Left cardiac atrium (tissue), 4 donors: ENCODE measurements at regions of chr6 and their contacts with region 1.

Region 1: GRCh38 chr6:7725849-7726415 is at the start of gene BMP6:
- DNase-seq: peak; percentile 91
- ATAC-seq: peak; percentile 91 to 97
- total RNA-seq, gene BMP6: 2.1 to 13.4 TPM

Region 2: DNA sequence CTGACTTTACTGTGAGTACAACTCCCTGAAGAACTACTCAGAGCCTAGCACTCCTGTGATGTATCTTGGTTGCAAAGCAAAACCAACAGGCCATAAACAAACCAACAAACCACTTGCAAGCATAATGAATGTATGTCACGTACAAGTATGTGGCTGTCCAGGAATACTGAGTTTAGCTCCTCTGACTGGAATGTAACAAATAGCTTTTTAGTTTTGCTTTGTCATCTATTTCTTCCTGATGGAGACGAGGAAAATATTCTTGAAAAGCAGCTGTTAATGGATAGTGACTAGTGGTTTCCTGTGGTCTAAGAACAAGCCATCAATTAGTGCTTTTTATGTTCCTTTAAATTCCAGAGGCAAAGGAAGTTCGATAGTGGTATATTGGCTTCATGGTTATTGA is 1239.3 kb before region 1 on chr6:
- intact Hi-C with region 1: no loop called
- DNase-seq: no peak
- ATAC-seq: no peak

Region 3: DNA sequence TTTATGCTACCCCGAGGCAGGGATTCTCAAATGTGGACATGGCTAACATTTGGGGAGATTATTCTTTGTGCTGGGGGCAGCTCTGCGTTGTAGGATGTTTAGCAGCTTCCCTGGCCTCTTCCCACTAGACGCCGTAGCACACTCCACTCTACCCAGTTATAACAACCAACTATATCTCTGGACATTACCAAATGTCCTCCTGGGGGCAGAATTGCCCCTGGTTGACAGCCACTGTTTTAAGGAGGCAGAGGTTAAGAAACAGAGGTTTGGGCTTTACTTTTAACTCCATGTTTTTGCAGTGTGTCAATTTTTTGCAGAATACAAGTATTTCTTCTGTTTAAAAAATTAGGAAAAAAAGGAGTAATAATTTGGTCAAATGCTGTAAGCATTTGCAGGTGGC is 56.2 kb before region 1 on chr6:
- intact Hi-C with region 1: no loop called
- DNase-seq: no peak
- ATAC-seq: no peak

Region 4: DNA sequence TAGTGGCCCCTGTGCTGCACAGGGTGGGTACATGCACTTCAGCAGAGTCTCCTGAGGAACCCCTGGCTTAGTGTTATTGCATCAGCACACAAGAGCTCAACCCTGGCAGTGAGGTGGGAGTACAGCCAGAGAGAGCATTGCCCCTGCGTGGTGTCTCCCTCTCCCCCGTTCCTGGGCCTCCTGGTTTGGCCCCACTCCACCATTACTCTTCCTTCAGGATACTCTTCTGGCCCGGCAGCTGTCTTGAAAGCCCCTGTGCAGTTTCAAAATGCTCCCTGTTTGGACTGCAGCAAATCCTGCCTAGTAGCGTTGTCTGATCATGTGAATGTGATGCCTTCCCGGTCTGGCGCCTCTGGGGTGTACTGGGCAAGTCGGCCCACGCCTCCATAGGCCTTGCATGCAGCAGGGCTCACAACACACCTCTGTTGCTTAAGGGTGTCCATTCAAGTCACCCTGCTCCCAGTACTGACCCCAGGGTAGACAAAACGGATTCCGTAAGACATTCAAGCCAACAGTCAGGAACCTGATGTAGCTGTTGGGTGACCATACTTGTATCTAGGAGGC is 152.6 kb after region 1 on chr6:
- intact Hi-C with region 1: loop called in 1 of 2 experiments (anchors 10 kb)
- DNase-seq: no peak
- ATAC-seq: peak in 1 of 2 donors; percentile 12

Region 5: DNA sequence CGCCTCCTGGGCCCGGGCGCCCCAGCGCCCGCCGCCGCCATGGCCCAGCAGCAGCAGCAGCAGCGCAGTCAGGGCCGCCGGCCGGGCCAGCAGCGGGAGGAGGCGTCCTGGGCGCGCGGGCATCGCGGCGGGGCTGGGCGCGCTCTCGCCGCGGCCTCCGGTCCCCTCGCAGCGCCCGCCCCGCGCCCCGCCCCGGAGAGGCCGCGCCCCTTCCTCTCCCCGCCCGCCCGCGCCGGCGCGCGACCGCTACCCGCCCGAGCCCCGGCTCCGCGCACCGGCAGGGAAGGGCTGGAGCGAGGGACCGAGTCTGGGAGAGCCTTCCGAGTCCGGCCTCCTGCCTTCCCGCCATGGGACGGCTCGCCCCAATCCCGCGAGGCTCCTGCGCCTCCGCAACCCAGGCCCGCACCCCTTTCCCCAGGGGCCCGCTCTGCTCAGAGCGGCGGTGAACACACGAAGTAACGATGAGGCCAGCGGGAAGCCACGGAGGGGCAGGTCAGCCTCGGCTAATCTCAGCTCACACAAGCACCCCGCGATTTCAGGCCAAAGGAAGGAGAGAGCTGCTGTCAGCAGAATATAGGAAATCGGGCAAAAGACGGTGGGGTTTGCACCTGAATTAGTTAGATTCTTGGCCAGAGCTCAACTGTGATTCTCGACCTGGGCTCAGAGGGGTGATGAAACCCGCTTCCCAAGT is 184.9 kb after region 1 on chr6 and contains the start of gene TXNDC5:
- intact Hi-C with region 1: loop called (anchors 10 kb)
- DNase-seq: peak; percentile 84
- ATAC-seq: peak; percentile 91
- total RNA-seq, gene TXNDC5: 65.3 to 80.7 TPM

Region 6: DNA sequence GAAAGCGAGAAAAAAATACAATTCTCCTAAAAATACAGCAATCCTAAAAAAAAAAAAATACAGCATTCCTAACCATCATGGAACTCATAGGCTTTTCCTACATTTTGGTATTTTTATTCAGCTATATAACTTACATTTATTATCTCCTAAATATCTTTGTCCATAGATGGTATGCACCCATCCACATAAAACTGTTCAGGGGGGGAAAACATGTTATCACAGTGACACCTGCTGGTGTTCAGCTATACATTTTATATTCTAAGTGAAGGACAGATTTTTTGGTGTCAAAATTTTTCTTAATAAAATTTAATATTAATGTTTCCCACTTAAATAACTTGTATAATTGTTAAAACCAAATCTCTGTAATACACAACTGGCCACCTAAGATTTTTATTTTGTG is 280.3 kb after region 1 on chr6:
- intact Hi-C with region 1: loop called (anchors 5 kb)
- DNase-seq: no peak
- ATAC-seq: peak; percentile 44 to 61

Region 7: DNA sequence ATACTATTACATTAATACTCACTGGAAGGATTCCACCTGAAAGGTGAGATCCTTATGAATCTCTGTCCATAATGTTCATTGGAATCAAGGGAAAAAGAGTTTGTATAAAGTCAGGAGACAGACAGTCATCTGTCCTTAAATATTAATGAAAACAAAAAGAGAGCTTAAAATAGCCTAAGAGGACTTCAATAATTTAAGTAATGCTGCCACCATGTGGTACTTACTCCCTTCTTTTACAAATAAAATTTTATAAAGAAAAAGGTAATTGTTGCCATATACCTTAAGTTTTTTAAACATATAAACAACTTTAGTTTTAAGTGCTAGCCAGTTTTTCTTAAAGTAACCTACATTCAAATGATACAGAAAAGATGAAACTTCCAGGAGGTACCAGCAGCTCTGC is 333.2 kb after region 1 on chr6:
- intact Hi-C with region 1: loop called (anchors 2 to 5 kb)
- DNase-seq: no peak
- ATAC-seq: no peak